Esophagus muscularis mucosa (tissue), 4 donors: ENCODE measurements at regions of chr6 and their contacts with region 1.

Region 1: DNA sequence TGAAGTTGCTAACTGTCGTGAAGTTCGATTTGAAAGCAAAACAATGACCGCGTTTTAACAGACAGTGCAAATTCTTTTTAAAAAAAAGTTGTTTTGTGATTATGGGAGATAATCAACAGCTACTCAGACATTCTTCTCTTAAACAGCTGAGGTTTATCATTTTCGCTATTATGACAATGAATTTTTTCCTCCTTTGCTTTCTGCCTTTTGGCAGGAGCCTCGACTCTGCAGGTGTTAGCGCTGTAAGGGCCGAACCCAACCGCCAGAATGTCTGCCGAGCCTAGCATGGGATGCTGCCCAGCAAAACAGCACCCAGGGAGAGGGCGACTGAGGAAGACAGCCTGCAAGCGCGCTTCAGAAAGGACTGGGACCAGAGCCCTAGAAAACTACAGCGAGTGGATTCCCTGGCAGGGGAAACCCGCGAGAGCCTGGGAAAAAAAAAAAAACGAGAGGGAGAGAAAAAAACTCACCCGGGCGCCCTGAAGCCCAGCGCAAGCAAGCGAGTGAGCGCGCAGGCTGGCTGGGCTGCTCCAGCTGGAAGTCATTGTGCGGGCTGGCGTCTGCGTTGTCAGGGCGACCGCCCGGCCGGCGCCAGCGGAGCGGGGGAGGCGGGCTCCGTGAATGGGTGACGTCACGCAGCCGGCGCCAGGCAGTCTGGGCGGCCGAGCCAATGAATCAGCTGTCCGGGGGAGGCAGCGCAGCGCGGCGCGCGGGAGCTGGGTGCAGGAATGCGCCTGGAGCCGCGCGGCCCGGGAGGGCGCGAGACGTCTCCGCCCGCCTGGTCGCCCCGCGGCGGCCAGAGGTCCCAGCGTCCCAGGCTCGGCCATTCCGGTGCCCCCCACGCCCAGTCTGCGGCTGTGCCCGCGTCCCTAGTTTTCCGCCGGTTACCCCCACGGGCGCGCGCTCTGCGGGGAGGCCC is 32.7 kb upstream of the ID4 start:
- DNase-seq: peak; percentile 95
- H3K4me3 ChIP-seq: peak overlapping the region; percentile 57 to 67 (median 64)
- H3K27ac ChIP-seq: peak overlapping the region; percentile 92 to 98 (median 94)
- H3K4me1 ChIP-seq: peaks cover 11 to 46% (median 41%) of the 10 kb centered on the region in 4 donors
- H3K27me3 ChIP-seq: no peaks in the 10 kb centered on the region
- CTCF ChIP-seq: peak in 1 of 3 experiments; percentile 10
- EP300 ChIP-seq: peak; percentile 96
- POLR2A ChIP-seq: peak; percentile 78

Region 2: GRCh38 chr6:19836799-19837510 is 32.5 kb after region 1 on chr6 and contains the start of gene ID4:
- intact Hi-C with region 1: loop called (anchors 5 kb)
- DNase-seq: peak; percentile 97
- H3K4me3 ChIP-seq: peak within 1 kb of the TSS; percentile 88 to 90 (median 90)
- H3K27ac ChIP-seq: peak within 1 kb of the TSS; percentile 94 to 98 (median 96)
- H3K4me1 ChIP-seq: peaks cover 0 to 37% (median 27%) of the 10 kb centered on the region in 4 donors
- H3K27me3 ChIP-seq: peaks cover 0 to 11% (median 0%) of the 10 kb centered on the region in 4 donors
- CTCF ChIP-seq: no peak
- EP300 ChIP-seq: no peak
- POLR2A ChIP-seq: peak; percentile 92
- total RNA-seq, gene ID4: 60.2 to 158 (median 63.3) TPM